Spleen (tissue), 13 donors: ENCODE measurements at regions of chr10 and their contacts with region 1.

Region 1: GRCh38 chr10:20768843-20769242 is 128.3 kb downstream of the NEBL start:
- DNase-seq: no peak
- H3K4me3 ChIP-seq: no peak overlapping the region
- H3K27ac ChIP-seq: no peak overlapping the region
- H3K4me1 ChIP-seq: no peaks in the 10 kb centered on the region
- H3K27me3 ChIP-seq: no peaks in the 10 kb centered on the region
- CTCF ChIP-seq: peak in 3 of 11 experiments; percentile 17 to 40 (median 21)
- POLR2A ChIP-seq: no peak

Region 2: DNA sequence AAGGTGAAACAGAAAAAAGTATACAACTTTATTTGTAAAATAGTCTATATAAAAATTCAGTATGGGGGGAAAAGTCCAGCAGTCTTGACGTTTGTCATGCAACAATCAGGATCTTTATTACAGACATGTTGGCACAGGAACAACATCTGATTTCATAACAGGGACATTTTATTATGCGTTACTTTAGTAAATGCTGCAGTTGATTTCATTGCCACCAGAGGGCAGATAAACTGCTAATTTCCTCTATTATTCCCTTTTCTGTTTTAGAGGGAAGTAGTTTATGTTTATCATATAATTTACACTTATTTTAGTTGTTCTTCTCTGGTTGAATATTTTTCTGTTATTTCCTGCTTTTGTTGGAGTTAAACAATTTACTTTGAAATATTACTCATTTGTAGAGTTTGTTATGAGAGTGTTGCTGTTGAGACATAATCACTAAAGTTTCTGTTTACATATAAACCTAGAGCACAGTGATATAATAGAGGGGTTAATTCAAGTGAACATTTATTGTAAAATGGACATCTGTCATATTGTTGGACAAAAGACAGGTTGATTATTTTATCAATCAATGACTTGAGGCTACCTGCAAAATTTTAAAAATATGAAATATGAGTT is 949.3 kb before region 1 on chr10:
- intact Hi-C with region 1: loop called (anchors 10 kb)
- DNase-seq: no peak
- H3K4me3 ChIP-seq: peak overlapping the region in 4 of 8 donors; percentile 11 to 79 (median 60)
- H3K27ac ChIP-seq: peak overlapping the region in 6 of 8 donors; percentile 4 to 89 (median 18)
- H3K4me1 ChIP-seq: peaks cover 0 to 64% (median 15%) of the 10 kb centered on the region in 6 donors
- H3K27me3 ChIP-seq: peaks cover 0 to 40% (median 16%) of the 10 kb centered on the region in 7 donors
- CTCF ChIP-seq: peak; percentile 56 to 86 (median 76)
- POLR2A ChIP-seq: no peak

Region 3: DNA sequence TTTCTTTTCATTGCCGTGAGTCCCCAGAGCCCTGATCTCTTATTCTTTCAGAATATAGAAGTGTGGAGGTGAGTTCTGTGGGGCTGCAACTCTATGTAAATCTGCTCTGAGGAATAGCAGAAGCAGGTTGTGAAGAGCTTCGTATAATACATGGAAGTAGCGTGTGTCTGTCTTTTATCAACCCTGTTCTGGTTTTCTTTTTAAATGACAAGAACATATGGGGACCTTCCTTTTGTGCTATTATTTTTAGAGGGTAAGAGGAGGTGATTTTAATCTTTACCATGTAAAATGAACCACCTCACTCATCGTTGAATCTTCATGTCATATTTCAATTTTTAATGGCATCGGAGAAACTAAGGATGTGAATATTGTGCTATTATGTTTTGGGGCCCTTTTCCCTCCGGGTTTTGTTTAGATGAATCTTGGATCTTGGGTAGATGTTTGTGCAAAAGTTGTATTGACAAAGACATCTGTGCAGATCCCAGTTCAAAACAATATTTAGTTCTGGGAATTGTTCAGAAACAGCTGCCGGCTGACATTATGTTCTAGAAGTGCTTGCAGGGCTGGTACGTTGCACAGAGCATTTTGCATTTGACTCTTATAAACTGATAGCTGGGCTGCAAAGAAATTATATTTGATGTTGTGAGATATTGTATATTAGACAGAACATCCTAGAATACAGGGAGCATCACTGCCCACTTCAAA is 905.9 kb before region 1 on chr10:
- intact Hi-C with region 1: no loop called
- DNase-seq: no peak
- H3K4me3 ChIP-seq: no peak overlapping the region
- H3K27ac ChIP-seq: no peak overlapping the region
- H3K4me1 ChIP-seq: peaks cover 0 to 4% (median 0%) of the 10 kb centered on the region in 6 donors
- H3K27me3 ChIP-seq: no peaks in the 10 kb centered on the region
- CTCF ChIP-seq: no peak
- POLR2A ChIP-seq: no peak

Region 4: GRCh38 chr10:20582041-20582440 is 186.8 kb before region 1 on chr10:
- intact Hi-C with region 1: no loop called
- DNase-seq: no peak
- H3K4me3 ChIP-seq: no peak overlapping the region
- H3K27ac ChIP-seq: no peak overlapping the region
- H3K4me1 ChIP-seq: no peaks in the 10 kb centered on the region
- H3K27me3 ChIP-seq: no peaks in the 10 kb centered on the region
- CTCF ChIP-seq: no peak
- POLR2A ChIP-seq: no peak